ENCODE measurements at regions of chr18 and their contacts with region 1.

Region 1: GRCh38 chr18:49486953-49487710 is at the start of gene C18orf32:
- DNase-seq: peak; percentile 96
- ATAC-seq: peak; percentile 93
- H3K4me3 ChIP-seq: peak within 1 kb of the TSS; percentile 74 to 97 (median 82)
- H3K4me3 Mint-ChIP-seq: peak within 1 kb of the TSS; percentile 98
- H3K27ac ChIP-seq: peak within 1 kb of the TSS; percentile 88 to 95
- H3K27ac Mint-ChIP-seq: peak within 1 kb of the TSS; percentile 97
- H3K4me1 ChIP-seq: peaks cover 39% of the 10 kb centered on the region in 2 donors
- H3K4me1 Mint-ChIP-seq: peaks cover 66% of the 10 kb centered on the region
- H3K27me3 ChIP-seq: no peaks in the 10 kb centered on the region
- H3K27me3 Mint-ChIP-seq: no peaks in the 10 kb centered on the region
- CTCF ChIP-seq: no peak
- total RNA-seq, gene C18orf32: 27.7 and 36.3 TPM in 2 replicates

Region 2: DNA sequence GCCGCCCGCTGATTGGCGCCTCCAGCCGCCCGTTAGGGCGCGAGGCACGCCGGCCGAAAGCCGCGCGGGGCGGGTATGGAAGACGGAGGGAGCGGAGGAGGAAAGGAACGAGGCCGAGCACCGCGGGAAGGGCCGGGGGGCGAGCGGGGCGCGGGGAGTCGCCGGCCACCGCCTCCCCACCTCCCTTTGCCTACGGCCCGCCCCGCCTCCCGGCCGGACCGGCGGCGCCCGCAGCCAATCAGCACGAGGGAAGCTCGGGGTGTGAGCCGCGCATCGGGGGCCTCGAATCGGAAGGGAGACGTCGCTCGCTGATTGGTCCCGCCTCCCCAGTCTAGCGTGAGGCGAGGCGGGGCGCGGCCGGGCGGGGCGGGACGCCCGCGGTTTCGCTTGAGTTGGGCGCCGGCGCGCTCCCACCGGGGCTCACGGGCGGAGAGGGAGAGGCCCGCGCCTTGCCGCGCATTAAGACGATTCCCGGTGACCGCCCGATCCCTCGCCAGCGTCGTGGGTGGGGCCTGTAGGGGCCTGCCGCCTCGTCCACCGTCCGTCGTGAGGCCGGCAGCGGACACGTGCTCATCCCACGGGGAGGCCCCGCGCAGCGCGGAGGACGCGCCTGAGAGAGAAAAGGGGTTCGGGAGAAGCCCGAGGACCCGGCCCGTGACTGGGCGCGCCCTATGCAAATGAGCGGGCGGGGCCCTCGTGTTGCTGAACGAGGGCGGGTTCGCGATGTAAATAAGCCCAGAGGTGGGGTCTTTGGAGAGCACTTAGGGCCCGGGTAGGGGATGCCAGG is 1556.0 kb before region 1 on chr18:
- CTCF ChIA-PET with region 1: no interaction called
- POLR2A ChIA-PET with region 1: no interaction called
- intact Hi-C with region 1: loop called (anchors 2 kb)
- DNase-seq: peak; percentile 97
- ATAC-seq: peak; percentile 79
- H3K4me3 ChIP-seq: peak overlapping the region; percentile 56 to 91 (median 64)
- H3K4me3 Mint-ChIP-seq: peak overlapping the region; percentile 85
- H3K27ac ChIP-seq: peak overlapping the region; percentile 91 to 94
- H3K27ac Mint-ChIP-seq: peak overlapping the region; percentile 85
- H3K4me1 ChIP-seq: peaks cover 22 to 23% of the 10 kb centered on the region in 2 donors
- H3K4me1 Mint-ChIP-seq: peaks cover 37% of the 10 kb centered on the region
- H3K27me3 ChIP-seq: no peaks in the 10 kb centered on the region
- H3K27me3 Mint-ChIP-seq: peaks cover 6% of the 10 kb centered on the region
- CTCF ChIP-seq: no peak

Region 3: DNA sequence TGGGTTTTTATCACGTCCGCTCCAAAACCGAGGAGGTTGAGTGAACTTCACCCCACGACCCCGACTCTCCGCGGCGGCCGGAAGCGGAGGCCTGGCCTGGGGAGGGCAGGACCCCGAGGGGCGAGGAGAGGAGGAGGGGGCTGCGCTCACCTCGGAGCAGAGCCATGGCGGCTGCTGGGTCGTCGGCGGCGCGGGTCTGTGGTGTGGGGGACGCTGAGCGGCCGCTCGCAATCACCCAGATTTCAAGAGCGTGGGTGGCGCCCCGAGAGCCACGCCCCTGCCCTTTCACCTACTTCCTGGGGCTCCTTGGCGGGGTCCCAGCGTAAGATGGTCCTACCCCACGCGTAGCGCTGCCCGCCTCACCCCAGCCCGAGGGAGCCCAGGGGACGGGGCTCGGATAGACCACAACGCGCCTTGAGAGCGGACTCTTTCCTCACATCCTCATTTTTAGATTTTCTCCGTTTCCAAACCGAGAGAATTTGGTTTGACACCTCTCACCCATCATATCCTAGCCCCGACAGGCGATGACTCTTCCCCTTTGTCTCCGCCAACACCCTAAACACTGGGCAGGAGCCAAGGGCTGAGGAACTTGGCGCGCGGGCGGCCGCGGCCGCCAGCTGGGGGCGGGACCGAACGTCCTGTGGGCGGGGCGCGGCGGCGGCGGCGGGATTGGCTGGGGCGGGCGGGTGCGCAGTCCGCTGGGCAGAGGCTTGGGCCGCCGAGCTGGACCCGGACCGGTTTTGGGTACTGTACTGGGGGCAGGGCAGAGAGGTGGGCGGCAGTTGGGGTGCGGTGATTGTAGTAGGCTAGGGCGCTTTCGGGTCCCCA is 326.4 kb after region 1 on chr18 and contains the start of gene ACAA2:
- CTCF ChIA-PET with region 1: no interaction called
- POLR2A ChIA-PET with region 1: no interaction called
- intact Hi-C with region 1: loop called (anchors 1 kb)
- DNase-seq: peak; percentile 85
- ATAC-seq: peak; percentile 87
- H3K4me3 ChIP-seq: peak within 1 kb of the TSS; percentile 57 to 99 (median 88)
- H3K4me3 Mint-ChIP-seq: peak within 1 kb of the TSS; percentile 97
- H3K27ac ChIP-seq: peak within 1 kb of the TSS; percentile 87 to 90
- H3K27ac Mint-ChIP-seq: peak within 1 kb of the TSS; percentile 94
- H3K4me1 ChIP-seq: peaks cover 10 to 15% of the 10 kb centered on the region in 2 donors
- H3K4me1 Mint-ChIP-seq: peaks cover 20% of the 10 kb centered on the region
- H3K27me3 ChIP-seq: no peaks in the 10 kb centered on the region
- H3K27me3 Mint-ChIP-seq: no peaks in the 10 kb centered on the region
- CTCF ChIP-seq: no peak
- total RNA-seq, gene ACAA2: 24.0 and 25.0 TPM in 2 replicates

Region 4: DNA sequence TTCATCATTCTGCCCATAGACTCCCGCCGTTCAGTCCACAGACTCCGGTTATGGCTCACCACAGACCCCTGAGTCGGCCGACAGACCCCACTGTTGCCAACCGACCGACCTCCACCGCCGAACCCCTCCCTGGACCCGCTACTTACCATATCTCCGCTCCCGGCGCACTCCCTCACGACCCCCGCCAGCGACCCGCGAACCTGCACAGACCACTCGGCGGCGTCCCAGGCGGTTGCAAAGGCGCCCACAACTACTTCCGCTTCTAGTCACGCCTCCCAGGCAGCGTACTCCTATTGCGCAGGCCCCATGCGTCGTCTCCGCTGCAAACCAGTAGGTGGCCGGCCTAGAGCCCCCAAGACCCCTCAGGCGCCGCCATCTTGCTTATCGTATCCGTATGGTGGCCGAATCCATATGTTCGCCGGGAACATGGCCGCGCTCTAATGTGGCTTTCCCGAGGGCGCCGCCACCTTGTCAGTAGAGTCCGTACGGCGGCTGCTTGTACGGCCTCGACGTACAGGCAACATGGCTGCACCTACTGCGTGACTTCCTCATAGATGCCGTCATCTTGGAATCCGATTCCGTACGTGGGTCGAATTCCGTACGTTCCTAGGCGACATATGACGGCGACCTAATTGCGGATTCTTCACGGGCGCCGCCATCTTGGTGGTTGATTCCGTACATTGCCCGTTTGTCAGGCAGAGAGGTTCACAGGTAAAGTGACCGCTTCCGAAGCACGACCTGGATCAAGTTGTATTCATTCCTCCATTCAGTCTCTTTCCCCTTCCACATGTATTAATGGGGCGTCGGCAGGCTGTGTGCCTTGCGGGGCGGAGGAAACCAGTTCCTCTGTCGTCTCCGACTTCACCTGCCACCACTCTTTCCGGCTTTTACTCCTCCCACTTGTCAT is 800.6 kb after region 1 on chr18 and contains the start of gene CXXC1:
- CTCF ChIA-PET with region 1: no interaction called
- POLR2A ChIA-PET with region 1: interaction called, 8 read pairs
- intact Hi-C with region 1: loop called (anchors 1 kb)
- DNase-seq: peak; percentile 99
- ATAC-seq: peak; percentile 91
- H3K4me3 ChIP-seq: peak within 1 kb of the TSS; percentile 64 to 97 (median 90)
- H3K4me3 Mint-ChIP-seq: peak within 1 kb of the TSS; percentile 98
- H3K27ac ChIP-seq: peak within 1 kb of the TSS; percentile 93
- H3K27ac Mint-ChIP-seq: peak within 1 kb of the TSS; percentile 94
- H3K4me1 ChIP-seq: peaks cover 8 to 13% of the 10 kb centered on the region in 2 donors
- H3K4me1 Mint-ChIP-seq: peaks cover 34% of the 10 kb centered on the region
- H3K27me3 ChIP-seq: no peaks in the 10 kb centered on the region
- H3K27me3 Mint-ChIP-seq: no peaks in the 10 kb centered on the region
- CTCF ChIP-seq: peak; percentile 42
- total RNA-seq, gene CXXC1: 136 and 157 TPM in 2 replicates

Region 5: GRCh38 chr18:50878345-50879301 is 1391.5 kb after region 1 on chr18 and contains the start of gene ME2:
- CTCF ChIA-PET with region 1: no interaction called
- POLR2A ChIA-PET with region 1: interaction called, 4 read pairs
- intact Hi-C with region 1: loop called (anchors 5 kb)
- DNase-seq: peak; percentile 94
- ATAC-seq: peak; percentile 93
- H3K4me3 ChIP-seq: peak within 1 kb of the TSS; percentile 80 to 95 (median 90)
- H3K4me3 Mint-ChIP-seq: peak within 1 kb of the TSS; percentile 98
- H3K27ac ChIP-seq: peak within 1 kb of the TSS; percentile 96 to 98
- H3K27ac Mint-ChIP-seq: peak within 1 kb of the TSS; percentile 99
- H3K4me1 ChIP-seq: peaks cover 20 to 25% of the 10 kb centered on the region in 2 donors
- H3K4me1 Mint-ChIP-seq: peaks cover 30% of the 10 kb centered on the region
- H3K27me3 ChIP-seq: no peaks in the 10 kb centered on the region
- H3K27me3 Mint-ChIP-seq: peaks cover 3% of the 10 kb centered on the region
- CTCF ChIP-seq: no peak
- total RNA-seq, gene ME2: 55.4 and 57.8 TPM in 2 replicates

Measured in B cell (primary cell).